ENCODE measurements at regions of chr9 and their contacts with region 1.

Region 1: GRCh38 chr9:97900738-97901565 is 21.3 kb downstream of the TRMO start:
- DNase-seq: peak; percentile 68
- H3K4me3 Mint-ChIP-seq: no peak overlapping the region
- H3K27ac Mint-ChIP-seq: no peak overlapping the region
- H3K4me1 Mint-ChIP-seq: peaks cover 5% of the 10 kb centered on the region
- H3K27me3 Mint-ChIP-seq: no peaks in the 10 kb centered on the region
- CTCF ChIP-seq: peak; percentile 64

Region 2: GRCh38 chr9:97632985-97633858 is 267.7 kb before region 1 on chr9 and contains the starts of genes NCBP1 and TSTD2:
- CTCF ChIA-PET with region 1: no interaction called
- POLR2A ChIA-PET with region 1: no interaction called
- intact Hi-C with region 1: loop called (anchors 5 kb)
- DNase-seq: peak; percentile 98
- H3K4me3 Mint-ChIP-seq: peak within 1 kb of the TSS; percentile 83
- H3K27ac Mint-ChIP-seq: peak within 1 kb of the TSS; percentile 99
- H3K4me1 Mint-ChIP-seq: peaks cover 34% of the 10 kb centered on the region
- H3K27me3 Mint-ChIP-seq: no peaks in the 10 kb centered on the region
- CTCF ChIP-seq: no peak
- total RNA-seq, gene NCBP1: 35.6 and 38.7 TPM in 2 replicates
- total RNA-seq, gene TSTD2: 18.0 and 19.0 TPM in 2 replicates

Region 3: GRCh38 chr9:97703437-97704344 is 197.3 kb before region 1 on chr9:
- CTCF ChIA-PET with region 1: interaction called, 45 read pairs
- POLR2A ChIA-PET with region 1: interaction called, 11 read pairs
- intact Hi-C with region 1: no loop called
- DNase-seq: peak; percentile 88
- H3K4me3 Mint-ChIP-seq: peak overlapping the region; percentile 60
- H3K27ac Mint-ChIP-seq: peak overlapping the region; percentile 97
- H3K4me1 Mint-ChIP-seq: peaks cover 32% of the 10 kb centered on the region
- H3K27me3 Mint-ChIP-seq: no peaks in the 10 kb centered on the region
- CTCF ChIP-seq: no peak

Region 4: GRCh38 chr9:97717866-97718265 is 183.1 kb before region 1 on chr9:
- CTCF ChIA-PET with region 1: interaction called, 101 read pairs
- POLR2A ChIA-PET with region 1: no interaction called
- intact Hi-C with region 1: no loop called
- DNase-seq: no peak
- H3K4me3 Mint-ChIP-seq: no peak overlapping the region
- H3K27ac Mint-ChIP-seq: no peak overlapping the region
- H3K4me1 Mint-ChIP-seq: peaks cover 13% of the 10 kb centered on the region
- H3K27me3 Mint-ChIP-seq: no peaks in the 10 kb centered on the region
- CTCF ChIP-seq: no peak

Region 5: GRCh38 chr9:97961361-97961760 is 60.4 kb after region 1 on chr9:
- CTCF ChIA-PET with region 1: interaction called, 12 read pairs
- POLR2A ChIA-PET with region 1: no interaction called
- intact Hi-C with region 1: no loop called
- DNase-seq: no peak
- H3K4me3 Mint-ChIP-seq: no peak overlapping the region
- H3K27ac Mint-ChIP-seq: no peak overlapping the region
- H3K4me1 Mint-ChIP-seq: no peaks in the 10 kb centered on the region
- H3K27me3 Mint-ChIP-seq: peaks cover 17% of the 10 kb centered on the region
- CTCF ChIP-seq: no peak